CD8-positive, alpha-beta T cell (primary cell): ENCODE measurements at regions of chr6 and their contacts with region 1.

Region 1: GRCh38 chr6:159726918-159727716 is at the start of gene WTAP:
- DNase-seq: peak; percentile 94 to 99 (median 97)
- ATAC-seq: peak; percentile 88
- H3K4me3 ChIP-seq: peak within 1 kb of the TSS; percentile 88 to 94
- H3K4me3 Mint-ChIP-seq: peak within 1 kb of the TSS; percentile 88
- H3K27ac ChIP-seq: peak within 1 kb of the TSS; percentile 93 to 94
- H3K27ac Mint-ChIP-seq: peak within 1 kb of the TSS; percentile 99
- H3K4me1 ChIP-seq: peaks cover 51% of the 10 kb centered on the region
- H3K4me1 Mint-ChIP-seq: peaks cover 58% of the 10 kb centered on the region
- H3K27me3 ChIP-seq: no peaks in the 10 kb centered on the region
- H3K27me3 Mint-ChIP-seq: no peaks in the 10 kb centered on the region
- CTCF ChIP-seq: no peak
- total RNA-seq, gene WTAP: 224 to 226 TPM

Region 2: GRCh38 chr6:159414711-159415110 is 312.4 kb before region 1 on chr6:
- CTCF ChIA-PET with region 1: no interaction called
- POLR2A ChIA-PET with region 1: no interaction called
- intact Hi-C with region 1: no loop called
- DNase-seq: no peak
- ATAC-seq: no peak
- H3K4me3 ChIP-seq: no peak overlapping the region
- H3K4me3 Mint-ChIP-seq: no peak overlapping the region
- H3K27ac ChIP-seq: no peak overlapping the region
- H3K27ac Mint-ChIP-seq: no peak overlapping the region
- H3K4me1 ChIP-seq: no peaks in the 10 kb centered on the region
- H3K4me1 Mint-ChIP-seq: no peaks in the 10 kb centered on the region
- H3K27me3 ChIP-seq: no peaks in the 10 kb centered on the region
- H3K27me3 Mint-ChIP-seq: no peaks in the 10 kb centered on the region
- CTCF ChIP-seq: no peak

Region 3: DNA sequence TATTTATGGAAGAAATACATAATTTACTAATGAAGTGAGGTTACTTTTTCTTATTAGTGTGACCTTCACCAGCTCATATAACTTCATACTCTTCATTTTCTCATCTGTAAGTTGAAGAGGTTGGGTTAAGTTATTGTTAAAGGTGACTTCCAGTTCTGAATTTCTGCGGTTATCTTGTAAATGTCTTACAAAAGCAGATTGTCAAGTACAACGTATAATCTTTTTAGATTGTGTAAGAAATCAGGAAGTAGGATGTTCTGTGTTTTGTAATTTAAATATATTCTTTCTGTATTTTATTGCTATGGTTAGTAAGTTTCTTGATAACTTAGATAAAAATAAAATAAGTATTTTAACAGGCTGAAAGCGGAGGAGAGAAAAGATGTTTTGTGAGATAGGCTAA is 12.2 kb after region 1 on chr6:
- CTCF ChIA-PET with region 1: interaction called, 4 read pairs
- POLR2A ChIA-PET with region 1: interaction called, 10 read pairs
- intact Hi-C with region 1: loop called in 1 of 2 experiments (anchors 2 kb)
- DNase-seq: no peak
- ATAC-seq: no peak
- H3K4me3 ChIP-seq: no peak overlapping the region
- H3K4me3 Mint-ChIP-seq: no peak overlapping the region
- H3K27ac ChIP-seq: no peak overlapping the region
- H3K27ac Mint-ChIP-seq: no peak overlapping the region
- H3K4me1 ChIP-seq: peaks cover 29% of the 10 kb centered on the region
- H3K4me1 Mint-ChIP-seq: peaks cover 49% of the 10 kb centered on the region
- H3K27me3 ChIP-seq: no peaks in the 10 kb centered on the region
- H3K27me3 Mint-ChIP-seq: no peaks in the 10 kb centered on the region
- CTCF ChIP-seq: no peak

Region 4: DNA sequence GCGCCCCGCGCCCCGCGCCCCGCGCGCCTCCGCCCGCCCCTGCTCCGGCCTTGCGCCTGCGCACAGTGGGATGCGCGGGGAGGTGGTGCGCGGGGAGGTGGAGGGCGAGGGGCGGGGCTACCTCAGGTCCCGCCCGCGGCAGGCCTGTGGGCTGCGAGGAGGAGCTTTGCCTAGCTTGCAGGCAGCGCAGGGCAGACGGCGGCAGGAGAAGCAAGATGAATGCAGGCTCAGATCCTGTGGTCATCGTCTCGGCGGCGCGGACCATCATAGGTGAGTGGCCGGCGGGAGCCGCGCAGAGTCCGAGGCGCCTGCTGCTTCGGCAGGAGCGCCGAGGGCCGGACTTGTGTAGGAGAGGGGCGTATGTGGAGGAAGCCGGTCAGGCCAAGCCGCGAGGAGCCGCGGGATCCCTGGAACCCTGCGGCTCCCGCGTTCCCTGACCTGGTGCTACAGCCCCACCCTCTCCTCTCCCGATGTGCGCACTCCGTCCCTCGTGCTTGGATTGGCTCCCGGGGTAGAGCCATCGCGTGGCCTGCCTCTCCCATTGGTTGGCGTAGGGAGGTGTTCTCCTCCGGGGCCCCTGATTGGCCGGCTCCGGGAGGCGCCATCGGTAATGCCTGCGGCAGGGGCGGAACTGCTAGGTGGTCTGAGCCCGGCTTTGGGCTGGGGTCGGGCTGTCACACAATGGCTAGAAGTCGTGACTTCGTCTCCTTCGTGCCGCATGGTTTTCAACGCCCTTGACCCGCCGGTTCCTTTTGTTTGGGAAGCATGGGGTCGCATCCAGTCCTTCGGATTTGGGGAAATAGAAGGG is 35.0 kb after region 1 on chr6 and contains the start of gene ACAT2:
- CTCF ChIA-PET with region 1: interaction called, 4 read pairs
- POLR2A ChIA-PET with region 1: interaction called, 56 read pairs
- intact Hi-C with region 1: loop called (anchors 1 kb)
- DNase-seq: peak; percentile 81 to 96 (median 91)
- ATAC-seq: peak; percentile 86
- H3K4me3 ChIP-seq: peak within 1 kb of the TSS; percentile 85 to 99
- H3K4me3 Mint-ChIP-seq: peak within 1 kb of the TSS; percentile 96
- H3K27ac ChIP-seq: peak within 1 kb of the TSS; percentile 97 to 99
- H3K27ac Mint-ChIP-seq: peak within 1 kb of the TSS; percentile 97
- H3K4me1 ChIP-seq: peaks cover 16% of the 10 kb centered on the region
- H3K4me1 Mint-ChIP-seq: peaks cover 29% of the 10 kb centered on the region
- H3K27me3 ChIP-seq: no peaks in the 10 kb centered on the region
- H3K27me3 Mint-ChIP-seq: no peaks in the 10 kb centered on the region
- CTCF ChIP-seq: no peak
- total RNA-seq, gene ACAT2: 23.3 to 24.1 TPM

Region 5: DNA sequence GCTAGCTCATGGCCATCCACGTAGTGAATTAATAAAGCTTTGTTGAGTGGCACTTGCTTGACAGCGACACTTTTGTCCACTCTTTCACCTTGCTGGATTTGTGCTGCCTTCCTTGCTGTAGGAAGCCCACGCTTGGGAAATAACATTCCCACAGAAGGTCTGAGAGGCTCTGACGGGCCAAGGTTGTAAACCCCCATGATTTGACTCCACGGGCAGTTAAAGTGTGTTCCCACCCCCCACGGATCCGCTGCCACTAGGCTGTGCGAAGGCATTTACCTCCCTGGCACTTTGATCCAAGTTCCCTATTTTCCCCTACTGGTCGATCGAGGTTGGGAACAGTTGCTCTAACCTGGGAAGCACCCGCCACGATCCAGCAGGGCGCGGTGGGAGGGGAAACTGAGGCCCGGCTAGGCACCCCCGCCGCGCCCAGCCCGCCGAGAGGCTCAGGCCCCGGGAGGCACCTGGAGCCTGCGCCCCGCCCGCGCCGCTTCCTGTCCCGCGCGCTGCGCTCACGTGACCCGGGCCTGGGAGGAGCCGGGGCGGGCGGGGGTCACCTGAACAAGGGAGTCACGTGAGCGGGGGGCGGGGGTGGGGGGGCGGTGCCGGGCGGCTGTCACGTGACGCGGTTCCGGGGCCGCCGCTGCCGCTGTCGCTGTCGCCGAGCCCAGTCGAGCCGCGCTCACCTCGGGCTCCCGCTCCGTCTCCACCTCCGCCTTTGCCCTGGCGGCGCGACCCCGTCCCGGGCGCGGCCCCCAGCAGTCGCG is 241.5 kb after region 1 on chr6 and contains the start of gene IGF2R:
- CTCF ChIA-PET with region 1: no interaction called
- POLR2A ChIA-PET with region 1: interaction called, 5 read pairs
- intact Hi-C with region 1: loop called (anchors 1 to 2 kb)
- DNase-seq: peak; percentile 86 to 96 (median 94)
- ATAC-seq: peak; percentile 85
- H3K4me3 ChIP-seq: peak within 1 kb of the TSS; percentile 64 to 67
- H3K4me3 Mint-ChIP-seq: peak within 1 kb of the TSS; percentile 91
- H3K27ac ChIP-seq: peak within 1 kb of the TSS; percentile 59 to 82
- H3K27ac Mint-ChIP-seq: peak within 1 kb of the TSS; percentile 89
- H3K4me1 ChIP-seq: peaks cover 36% of the 10 kb centered on the region
- H3K4me1 Mint-ChIP-seq: peaks cover 42% of the 10 kb centered on the region
- H3K27me3 ChIP-seq: no peaks in the 10 kb centered on the region
- H3K27me3 Mint-ChIP-seq: no peaks in the 10 kb centered on the region
- CTCF ChIP-seq: no peak
- total RNA-seq, gene IGF2R: 38.5 to 40.6 TPM

Region 6: DNA sequence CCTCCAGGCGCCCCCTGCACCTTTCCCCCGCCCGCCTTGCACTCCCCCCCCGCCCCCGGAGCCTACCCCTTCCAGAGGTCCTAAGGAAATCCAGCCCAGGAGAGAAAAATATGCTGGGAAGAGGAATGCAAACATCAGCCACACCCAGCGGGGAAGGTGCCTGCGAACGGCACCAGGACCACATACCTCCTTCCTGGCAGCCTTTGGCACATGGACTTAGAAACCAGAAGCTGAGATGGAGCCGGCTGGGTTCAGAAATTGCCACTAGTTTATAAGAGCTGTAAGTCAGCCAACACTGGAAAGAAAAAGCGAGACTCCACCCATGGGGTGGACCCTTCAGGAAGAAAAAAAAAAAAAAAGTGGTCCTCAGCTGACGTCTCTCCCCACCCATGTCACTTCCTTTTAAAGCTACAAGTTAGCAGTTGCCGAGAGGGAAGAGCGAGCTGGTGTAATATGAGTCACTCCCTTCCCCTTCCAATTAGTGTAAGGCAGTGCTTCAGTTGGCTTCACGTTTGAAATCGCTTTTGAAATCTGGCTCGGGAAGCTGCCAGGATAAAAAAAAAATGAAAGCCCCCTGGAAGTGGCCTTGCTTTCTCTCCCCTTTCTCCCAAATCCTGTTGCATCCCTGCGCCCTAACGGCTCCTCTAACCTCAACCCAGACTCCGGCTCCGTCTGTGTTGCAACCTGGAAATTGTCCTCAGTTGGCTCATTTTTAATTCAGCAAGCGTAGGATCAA is 1546.8 kb after region 1 on chr6 and contains the start of gene AGPAT4:
- CTCF ChIA-PET with region 1: no interaction called
- POLR2A ChIA-PET with region 1: no interaction called
- intact Hi-C with region 1: loop called in 1 of 2 experiments (anchors 5 kb)
- DNase-seq: peak; percentile 39 to 95 (median 63)
- ATAC-seq: peak; percentile 94
- H3K4me3 ChIP-seq: peak within 1 kb of the TSS; percentile 61 to 72
- H3K4me3 Mint-ChIP-seq: peak within 1 kb of the TSS; percentile 90
- H3K27ac ChIP-seq: peak within 1 kb of the TSS; percentile 61 to 85
- H3K27ac Mint-ChIP-seq: peak within 1 kb of the TSS; percentile 91
- H3K4me1 ChIP-seq: peaks cover 14% of the 10 kb centered on the region
- H3K4me1 Mint-ChIP-seq: peaks cover 21% of the 10 kb centered on the region
- H3K27me3 ChIP-seq: no peaks in the 10 kb centered on the region
- H3K27me3 Mint-ChIP-seq: no peaks in the 10 kb centered on the region
- CTCF ChIP-seq: no peak
- total RNA-seq, gene AGPAT4: 1.2 to 2.8 TPM